Calu3 (cell line): ENCODE measurements at regions of chr4 and their contacts with region 1.

Region 1: DNA sequence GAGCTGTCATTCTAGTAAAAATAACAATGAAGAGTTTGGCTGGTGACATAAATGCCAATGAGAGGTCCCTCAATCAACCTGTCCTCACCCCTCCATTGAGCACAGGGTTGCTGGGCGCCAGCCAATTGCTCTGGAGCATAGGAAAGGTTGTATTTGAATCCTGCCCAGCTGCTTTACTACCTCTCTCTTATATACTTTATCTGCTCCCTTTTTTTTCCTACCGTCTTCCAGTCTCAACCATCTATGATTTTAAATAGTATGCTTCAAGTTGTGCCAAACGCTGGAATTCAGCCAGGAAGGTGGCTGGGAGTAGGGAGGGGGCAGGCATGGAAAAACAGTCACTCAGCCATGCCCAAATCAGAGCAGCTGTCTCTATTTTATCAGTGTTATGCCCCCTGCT is 153.8 kb downstream of the NR3C2 start:
- DNase-seq: no peak
- H3K4me3 Mint-ChIP-seq: no peak overlapping the region
- H3K27ac Mint-ChIP-seq: no peak overlapping the region
- H3K4me1 Mint-ChIP-seq: no peaks in the 10 kb centered on the region
- H3K27me3 Mint-ChIP-seq: no peaks in the 10 kb centered on the region
- CTCF ChIP-seq: no peak

Region 2: GRCh38 chr4:148415500-148415899 is 127.1 kb after region 1 on chr4:
- CTCF ChIA-PET with region 1: no interaction called
- intact Hi-C with region 1: loop called (anchors 10 kb)
- DNase-seq: no peak
- H3K4me3 Mint-ChIP-seq: no peak overlapping the region
- H3K27ac Mint-ChIP-seq: no peak overlapping the region
- H3K4me1 Mint-ChIP-seq: peaks cover 18% of the 10 kb centered on the region
- H3K27me3 Mint-ChIP-seq: no peaks in the 10 kb centered on the region
- CTCF ChIP-seq: no peak

Region 3: DNA sequence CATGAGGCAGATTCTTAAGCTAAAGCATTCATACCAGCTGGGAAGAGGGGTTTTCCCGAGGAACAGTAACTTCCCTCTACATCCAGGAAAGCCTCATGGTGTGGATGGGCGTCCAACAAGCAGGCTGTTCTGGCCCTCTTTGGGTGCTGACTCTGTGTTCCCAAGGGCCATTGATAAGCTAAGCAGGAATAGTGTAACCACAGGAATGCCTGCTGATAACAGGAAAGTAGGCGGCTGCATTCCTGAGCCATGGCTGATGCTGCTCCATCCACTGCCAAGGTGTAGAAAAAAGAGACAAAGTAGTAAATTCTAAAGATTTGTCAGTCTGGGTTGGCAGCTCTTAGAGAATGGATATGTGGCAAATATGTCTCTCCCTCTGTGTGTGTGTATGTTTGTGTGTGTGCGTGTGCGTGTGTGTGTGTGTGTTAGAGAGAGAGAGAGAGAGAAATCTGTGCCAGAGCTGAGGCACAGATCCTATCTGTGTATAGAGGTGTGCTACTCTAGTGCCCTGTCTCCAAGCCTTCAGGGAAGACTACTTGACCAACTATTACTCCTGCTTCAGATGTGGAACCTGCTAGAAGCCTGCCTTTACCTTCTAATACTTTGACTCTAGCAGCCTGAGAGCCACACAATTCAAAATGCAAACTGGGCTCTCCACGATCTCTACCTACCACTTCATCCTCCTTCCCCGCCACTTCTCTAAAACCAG is 506.9 kb after region 1 on chr4:
- CTCF ChIA-PET with region 1: no interaction called
- intact Hi-C with region 1: loop called (anchors 10 kb)
- DNase-seq: peak; percentile 66
- H3K4me3 Mint-ChIP-seq: peak overlapping the region; percentile 3
- H3K27ac Mint-ChIP-seq: peak overlapping the region; percentile 45
- H3K4me1 Mint-ChIP-seq: peaks cover 45% of the 10 kb centered on the region
- H3K27me3 Mint-ChIP-seq: no peaks in the 10 kb centered on the region
- CTCF ChIP-seq: no peak

Region 4: DNA sequence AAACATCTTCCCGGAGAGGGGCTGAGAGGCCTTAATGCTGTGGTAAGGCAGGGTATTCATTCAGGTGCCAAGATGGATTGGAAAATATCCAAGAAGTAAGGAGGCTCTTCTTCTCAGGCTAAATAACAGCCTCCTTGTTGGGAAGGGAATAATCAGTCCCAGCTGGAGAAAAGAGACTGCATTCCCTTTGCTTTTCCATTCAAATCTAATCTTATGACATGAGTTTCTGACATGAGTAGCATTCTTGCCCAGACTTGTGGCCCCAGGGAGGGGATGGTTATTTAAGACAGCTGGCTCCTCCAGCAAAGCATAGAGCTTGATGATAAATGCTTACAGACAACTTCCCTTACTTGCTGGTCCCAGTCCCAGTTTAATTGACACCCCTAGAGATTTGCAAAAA is 1888.1 kb after region 1 on chr4:
- CTCF ChIA-PET with region 1: interaction called, 10 read pairs
- intact Hi-C with region 1: no loop called
- DNase-seq: no peak
- H3K4me3 Mint-ChIP-seq: no peak overlapping the region
- H3K27ac Mint-ChIP-seq: no peak overlapping the region
- H3K4me1 Mint-ChIP-seq: no peaks in the 10 kb centered on the region
- H3K27me3 Mint-ChIP-seq: no peaks in the 10 kb centered on the region
- CTCF ChIP-seq: no peak